GM12878 (cell line): ENCODE measurements at regions of chr18 and their contacts with region 1.

Region 1: DNA sequence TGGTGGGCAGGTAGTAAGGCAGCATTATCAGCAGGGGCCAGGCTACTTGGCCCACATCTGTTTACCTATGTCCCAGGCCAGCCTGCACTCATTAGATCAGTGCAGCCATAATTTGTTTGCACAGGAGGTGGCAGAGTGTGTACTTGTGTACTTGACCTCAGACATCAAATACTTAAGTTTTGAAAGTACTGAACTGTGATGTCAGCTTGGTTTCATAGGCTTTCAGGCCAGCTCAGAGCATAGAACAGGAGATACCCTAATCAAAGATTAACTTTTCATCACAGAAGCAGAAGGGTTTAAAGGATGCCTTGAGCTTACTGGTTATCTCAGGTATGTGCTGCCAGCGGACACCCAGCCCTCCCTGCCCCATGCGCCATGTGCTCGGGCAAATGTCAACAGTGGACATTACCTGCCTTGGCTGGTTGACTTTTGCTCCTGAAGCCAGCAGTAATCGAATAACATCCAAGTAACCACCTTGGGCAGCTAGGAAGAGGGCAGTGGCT is 33.2 kb downstream of the ANKRD29 start:
- DNase-seq: peak; percentile 45
- ATAC-seq: peak; percentile 95
- H3K4me3 ChIP-seq: no peak overlapping the region
- H3K27ac ChIP-seq: no peak overlapping the region
- H3K4me1 ChIP-seq: no peaks in the 10 kb centered on the region
- H3K27me3 ChIP-seq: no peaks in the 10 kb centered on the region
- CTCF ChIP-seq: peak in 2 of 3 experiments; percentile 14 to 47; a peak in 2 of 6 replicates
- EP300 ChIP-seq: no peak
- POLR2A ChIP-seq: no peak
- RAD21 ChIP-seq: peak; percentile 54; the same call in 1 of the 2 replicates

Region 2: GRCh38 chr18:23450022-23450421 is 179.5 kb before region 1 on chr18:
- CTCF ChIA-PET with region 1: no interaction called
- POLR2A ChIA-PET with region 1: no interaction called
- RAD21 ChIA-PET with region 1: no interaction called
- SMC1A ChIA-PET with region 1: no interaction called
- in situ Hi-C with region 1: no loop called
- intact Hi-C with region 1: no loop called
- DNase-seq: no peak
- ATAC-seq: no peak
- H3K4me3 ChIP-seq: no peak overlapping the region
- H3K27ac ChIP-seq: no peak overlapping the region
- H3K4me1 ChIP-seq: peaks cover 14% of the 10 kb centered on the region
- H3K27me3 ChIP-seq: no peaks in the 10 kb centered on the region
- CTCF ChIP-seq: no peak
- EP300 ChIP-seq: no peak
- POLR2A ChIP-seq: no peak
- RAD21 ChIP-seq: no peak

Region 3: GRCh38 chr18:23515911-23516546 is 113.5 kb before region 1 on chr18:
- CTCF ChIA-PET with region 1: interaction called, 11 read pairs
- POLR2A ChIA-PET with region 1: no interaction called
- RAD21 ChIA-PET with region 1: interaction called, 4 read pairs
- SMC1A ChIA-PET with region 1: no interaction called
- in situ Hi-C with region 1: no loop called
- intact Hi-C with region 1: no loop called
- DNase-seq: peak; percentile 39
- ATAC-seq: peak; percentile 99
- H3K4me3 ChIP-seq: no peak overlapping the region
- H3K27ac ChIP-seq: no peak overlapping the region
- H3K4me1 ChIP-seq: peaks cover 3% of the 10 kb centered on the region; the same call in 1 of the 2 replicates
- H3K27me3 ChIP-seq: no peaks in the 10 kb centered on the region
- CTCF ChIP-seq: peak; percentile 89 to 97 (median 94)
- EP300 ChIP-seq: no peak
- POLR2A ChIP-seq: no peak
- RAD21 ChIP-seq: peak; percentile 76

Region 4: GRCh38 chr18:23619388-23619881 is 10.1 kb before region 1 on chr18:
- CTCF ChIA-PET with region 1: interaction called, 22 read pairs
- POLR2A ChIA-PET with region 1: interaction called, 24 read pairs
- RAD21 ChIA-PET with region 1: interaction called, 20 read pairs
- SMC1A ChIA-PET with region 1: interaction called, 38 read pairs
- in situ Hi-C with region 1: no loop called
- intact Hi-C with region 1: no loop called
- DNase-seq: no peak
- ATAC-seq: peak; percentile 42
- H3K4me3 ChIP-seq: peak overlapping the region; percentile 57; the same call in 1 of the 2 replicates
- H3K27ac ChIP-seq: no peak overlapping the region
- H3K4me1 ChIP-seq: peaks cover 17% of the 10 kb centered on the region
- H3K27me3 ChIP-seq: peaks cover 0 to 5% of the 10 kb centered on the region in 2 experiments; a peak in 2 of 4 replicates
- CTCF ChIP-seq: no peak
- EP300 ChIP-seq: no peak; a peak in 1 of 4 replicates
- POLR2A ChIP-seq: no peak
- RAD21 ChIP-seq: no peak

Region 5: DNA sequence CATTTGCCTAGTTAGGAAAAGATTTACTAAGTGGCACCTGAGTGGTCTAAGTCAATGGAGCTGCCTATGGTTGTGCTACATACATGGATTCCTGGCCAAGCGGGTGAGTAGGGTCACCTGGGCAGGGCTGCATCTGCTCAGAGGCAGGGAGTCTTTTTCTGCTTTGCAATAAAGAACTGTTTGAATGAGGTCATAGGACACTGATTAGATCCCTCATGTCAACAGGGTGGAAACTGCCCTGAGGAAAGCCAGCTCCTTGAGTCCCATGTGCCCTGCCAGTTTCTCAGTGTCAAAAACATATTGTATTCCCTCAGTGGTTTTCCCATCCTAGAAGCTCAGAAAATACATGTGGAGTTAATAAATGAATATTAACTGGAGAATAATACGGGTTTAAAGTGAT is 64.3 kb after region 1 on chr18:
- CTCF ChIA-PET with region 1: interaction called, 3 read pairs
- POLR2A ChIA-PET with region 1: no interaction called
- RAD21 ChIA-PET with region 1: interaction called, 148 read pairs
- SMC1A ChIA-PET with region 1: interaction called, 11 read pairs
- in situ Hi-C with region 1: no loop called
- intact Hi-C with region 1: no loop called
- DNase-seq: no peak
- ATAC-seq: no peak
- H3K4me3 ChIP-seq: no peak overlapping the region
- H3K27ac ChIP-seq: no peak overlapping the region
- H3K4me1 ChIP-seq: no peaks in the 10 kb centered on the region
- H3K27me3 ChIP-seq: peaks cover 10 to 13% of the 10 kb centered on the region in 2 experiments
- CTCF ChIP-seq: no peak
- EP300 ChIP-seq: no peak
- POLR2A ChIP-seq: no peak
- RAD21 ChIP-seq: no peak

Region 6: DNA sequence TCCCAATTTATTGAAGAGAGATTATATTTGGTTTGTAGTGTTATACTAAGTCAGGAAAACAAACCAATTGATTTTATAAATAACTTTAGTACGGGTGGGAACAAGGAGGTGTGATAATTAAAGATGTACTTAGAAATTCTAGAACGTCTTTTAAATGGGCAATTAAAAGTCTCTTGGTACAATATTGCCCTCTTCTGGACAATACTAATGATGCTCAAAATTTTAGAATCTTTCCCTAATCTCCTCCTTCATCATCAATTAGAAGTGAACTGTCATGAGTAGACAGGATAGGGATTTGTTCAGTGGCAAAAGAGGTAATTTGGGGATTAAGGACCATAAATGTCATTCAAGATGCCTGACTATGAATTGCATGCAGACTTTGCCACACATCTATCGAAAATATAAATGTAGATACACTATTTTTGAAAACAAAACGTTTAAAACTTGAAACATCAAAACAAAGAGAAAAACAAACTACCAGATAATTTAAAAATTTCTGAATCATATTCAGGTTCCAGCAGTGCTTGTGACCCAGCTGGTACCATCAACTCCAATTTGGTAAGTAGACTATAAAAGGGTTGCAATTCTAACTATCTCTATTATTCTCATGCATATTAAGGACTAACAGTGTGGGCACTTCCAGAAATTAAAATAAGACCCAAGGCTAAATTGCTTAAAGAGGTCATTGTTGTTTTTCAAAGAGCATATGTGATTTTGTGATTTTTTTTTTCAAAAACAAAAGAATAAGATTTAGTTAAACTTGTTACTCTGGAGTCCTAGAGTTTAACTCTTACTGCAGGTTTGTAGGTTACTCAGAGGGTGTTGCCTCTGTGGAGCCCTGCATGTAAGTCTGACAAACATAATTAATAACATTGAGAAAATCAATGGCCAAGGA is 183.3 kb after region 1 on chr18:
- CTCF ChIA-PET with region 1: interaction called, 56 read pairs
- POLR2A ChIA-PET with region 1: no interaction called
- RAD21 ChIA-PET with region 1: interaction called, 5 read pairs
- SMC1A ChIA-PET with region 1: interaction called, 11 read pairs
- in situ Hi-C with region 1: loop called (anchors 5 kb)
- intact Hi-C with region 1: no loop called
- DNase-seq: no peak
- ATAC-seq: no peak
- H3K4me3 ChIP-seq: no peak overlapping the region
- H3K27ac ChIP-seq: no peak overlapping the region
- H3K4me1 ChIP-seq: peaks cover 15% of the 10 kb centered on the region
- H3K27me3 ChIP-seq: no peaks in the 10 kb centered on the region; a peak in 1 of 4 replicates
- CTCF ChIP-seq: peak; percentile 30 to 53 (median 38); a peak in 3 of 6 replicates
- EP300 ChIP-seq: no peak
- POLR2A ChIP-seq: no peak
- RAD21 ChIP-seq: peak; percentile 67

Region 7: GRCh38 chr18:24126155-24126961 is 496.9 kb after region 1 on chr18:
- CTCF ChIA-PET with region 1: no interaction called
- POLR2A ChIA-PET with region 1: no interaction called
- RAD21 ChIA-PET with region 1: no interaction called
- SMC1A ChIA-PET with region 1: no interaction called
- in situ Hi-C with region 1: loop called (anchors 10 kb)
- intact Hi-C with region 1: no loop called
- DNase-seq: no peak
- ATAC-seq: no peak
- H3K4me3 ChIP-seq: no peak overlapping the region
- H3K27ac ChIP-seq: no peak overlapping the region
- H3K4me1 ChIP-seq: no peaks in the 10 kb centered on the region
- H3K27me3 ChIP-seq: no peaks in the 10 kb centered on the region
- CTCF ChIP-seq: no peak
- EP300 ChIP-seq: no peak
- POLR2A ChIP-seq: no peak
- RAD21 ChIP-seq: no peak

Region 8: GRCh38 chr18:24862201-24862816 is 1232.8 kb after region 1 on chr18:
- CTCF ChIA-PET with region 1: no interaction called
- POLR2A ChIA-PET with region 1: no interaction called
- RAD21 ChIA-PET with region 1: no interaction called
- SMC1A ChIA-PET with region 1: no interaction called
- in situ Hi-C with region 1: no loop called
- intact Hi-C with region 1: no loop called
- DNase-seq: no peak
- ATAC-seq: no peak
- H3K4me3 ChIP-seq: no peak overlapping the region
- H3K27ac ChIP-seq: no peak overlapping the region
- H3K4me1 ChIP-seq: no peaks in the 10 kb centered on the region
- H3K27me3 ChIP-seq: no peaks in the 10 kb centered on the region; a peak in 2 of 4 replicates
- CTCF ChIP-seq: no peak
- EP300 ChIP-seq: no peak
- POLR2A ChIP-seq: no peak
- RAD21 ChIP-seq: no peak